Prostate gland (tissue), 2 donors: ENCODE measurements at regions of chr6 and their contacts with region 1.

Region 1: DNA sequence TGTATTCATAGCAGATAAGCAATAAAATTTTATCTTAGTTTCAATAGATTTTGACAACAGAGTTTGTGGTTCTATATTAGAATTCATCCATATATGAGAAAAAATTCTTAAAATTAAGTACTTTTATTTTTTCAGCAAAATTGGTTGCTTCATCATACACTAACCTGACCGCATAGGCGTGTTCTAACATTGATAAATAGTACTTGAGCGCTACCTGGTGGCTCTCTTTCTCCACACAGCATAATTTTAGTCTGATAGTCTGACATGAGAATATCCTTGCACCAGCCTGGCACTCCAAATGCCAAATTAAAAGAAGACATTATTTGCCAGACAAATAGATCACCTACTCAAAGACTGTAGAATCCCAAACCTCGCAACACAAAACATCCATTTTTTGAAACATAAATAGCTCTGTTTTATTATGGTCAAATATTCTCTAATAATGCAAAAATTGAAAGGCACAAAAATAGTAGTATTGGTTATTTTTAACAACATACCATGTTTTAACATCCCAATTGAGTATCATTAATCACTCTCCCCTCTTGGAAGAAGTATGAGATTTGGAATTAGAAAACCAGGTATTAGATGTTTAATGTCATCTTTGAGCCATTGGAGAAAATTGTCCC is 33.0 kb upstream of the FILIP1 start:
- DNase-seq: peak; percentile 74
- H3K4me3 ChIP-seq: no peak overlapping the region
- H3K27ac ChIP-seq: no peak overlapping the region
- H3K4me1 ChIP-seq: no peaks in the 10 kb centered on the region
- H3K27me3 ChIP-seq: no peaks in the 10 kb centered on the region
- CTCF ChIP-seq: peak; percentile 26 to 82 (median 74)
- POLR2A ChIP-seq: no peak

Region 2: GRCh38 chr6:75266716-75267291 is 259.8 kb before region 1 on chr6:
- intact Hi-C with region 1: loop called (anchors 5 kb)
- DNase-seq: no peak
- H3K4me3 ChIP-seq: no peak overlapping the region
- H3K27ac ChIP-seq: no peak overlapping the region
- H3K4me1 ChIP-seq: no peaks in the 10 kb centered on the region
- H3K27me3 ChIP-seq: no peaks in the 10 kb centered on the region
- CTCF ChIP-seq: peak; percentile 30 to 80 (median 67)
- POLR2A ChIP-seq: no peak